WTC11 (cell line): ENCODE measurements at regions of chr5 and their contacts with region 1.

Region 1: DNA sequence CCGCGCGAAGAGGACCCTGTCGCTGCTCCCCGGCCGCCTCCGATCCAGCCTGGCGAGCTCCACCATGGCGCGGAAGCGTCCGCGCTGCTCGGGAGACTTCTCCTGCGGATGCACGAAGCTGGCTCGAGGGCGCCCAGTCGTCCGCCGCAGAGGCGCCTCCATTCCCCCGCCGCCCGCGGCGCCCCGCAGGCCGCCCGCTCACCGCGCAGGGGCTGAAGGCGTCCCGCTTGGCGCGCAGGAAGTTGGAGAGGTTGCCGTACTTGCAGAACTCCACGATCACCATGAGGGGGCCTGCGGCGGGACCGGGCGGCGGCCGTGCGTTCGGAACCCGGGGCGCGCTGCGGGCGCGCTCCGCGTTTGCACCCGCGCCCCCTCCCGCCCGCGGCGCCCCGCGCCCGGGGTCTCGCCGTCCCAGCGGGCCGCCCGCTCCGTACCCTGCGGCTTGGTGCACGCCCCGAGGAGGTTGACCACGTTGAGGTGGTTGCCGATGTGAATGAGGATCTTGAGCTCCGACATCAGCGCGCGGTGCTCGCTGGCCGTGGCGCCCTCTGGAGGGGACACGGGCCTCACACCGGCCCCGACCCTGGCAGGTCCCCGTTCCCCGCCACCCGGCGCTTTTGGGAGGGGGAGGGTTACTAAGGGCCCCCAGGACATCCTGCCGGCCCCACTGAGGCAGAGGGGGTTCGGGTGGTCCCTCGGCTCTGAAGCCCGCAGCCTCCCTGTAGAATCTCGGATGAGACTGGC is 27.7 kb upstream of the SCGB3A1 start:
- DNase-seq: peak; percentile 76
- ATAC-seq: peak; percentile 76
- H3K4me3 Mint-ChIP-seq: peak overlapping the region; percentile 63
- H3K27ac Mint-ChIP-seq: no peak overlapping the region
- H3K4me1 Mint-ChIP-seq: peaks cover 2% of the 10 kb centered on the region; the same call in 1 of the 2 replicates
- H3K27me3 Mint-ChIP-seq: peaks cover 16% of the 10 kb centered on the region
- CTCF ChIP-seq: peak; percentile 36; the same call in 1 of the 2 replicates

Region 2: DNA sequence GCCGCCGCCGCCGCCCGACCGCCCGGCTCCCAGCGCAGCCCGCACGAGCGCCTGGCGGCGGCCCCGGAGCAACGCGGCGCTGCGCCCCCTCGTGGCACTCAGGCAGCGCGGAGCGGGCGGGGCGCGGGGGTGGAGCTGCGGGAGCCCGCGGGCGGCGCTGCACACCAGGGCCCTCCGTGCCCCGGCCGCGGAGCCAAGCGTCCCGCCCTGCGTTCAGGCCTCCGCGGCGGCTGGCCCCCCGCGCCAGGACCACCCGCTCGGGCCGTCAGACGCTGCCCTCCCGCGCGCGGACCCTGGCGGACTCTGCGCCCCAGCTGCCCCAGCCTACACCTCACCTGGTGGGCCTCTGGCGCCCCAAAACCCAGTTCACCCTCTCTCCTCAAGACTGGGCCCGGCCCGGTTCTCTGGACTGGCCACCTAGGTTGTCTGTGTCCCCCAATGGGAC is 409.8 kb before region 1 on chr5 and contains the start of gene RASGEF1C:
- CTCF ChIA-PET with region 1: interaction called, 11 read pairs
- POLR2A ChIA-PET with region 1: no interaction called
- DNase-seq: peak; percentile 71
- ATAC-seq: peak; percentile 82
- H3K4me3 Mint-ChIP-seq: peak within 1 kb of the TSS; percentile 72
- H3K27ac Mint-ChIP-seq: no peak within 1 kb of the TSS
- H3K4me1 Mint-ChIP-seq: peaks cover 10% of the 10 kb centered on the region
- H3K27me3 Mint-ChIP-seq: peaks cover 35% of the 10 kb centered on the region
- CTCF ChIP-seq: 0 out of 2 replicates have a peak, but pooled peaks have one; percentile 13
- total RNA-seq, gene RASGEF1C: 0.44 to 0.96 TPM (median 0.82 TPM) in 3 replicates

Region 3: DNA sequence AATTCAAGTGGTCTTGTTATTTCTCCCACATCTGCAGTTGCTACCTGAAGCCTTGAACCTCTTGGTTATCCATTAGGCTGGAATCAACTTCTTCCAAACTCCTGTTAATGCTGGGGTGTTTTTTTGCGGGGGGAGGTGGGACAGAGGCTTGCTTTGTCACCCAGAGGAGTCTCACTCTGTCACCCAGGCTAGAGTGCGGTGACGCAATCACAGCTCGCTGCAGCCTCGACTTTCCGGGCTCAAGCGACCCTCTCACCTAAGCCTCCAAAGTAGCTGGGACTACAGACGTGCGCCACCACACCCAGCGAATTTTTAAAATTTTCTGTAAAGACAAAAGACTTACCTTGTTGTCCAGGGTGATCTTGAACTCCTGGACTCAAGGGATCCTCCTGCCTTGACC is 32.1 kb before region 1 on chr5:
- CTCF ChIA-PET with region 1: interaction called, 11 read pairs
- POLR2A ChIA-PET with region 1: no interaction called
- DNase-seq: no peak
- ATAC-seq: no peak
- H3K4me3 Mint-ChIP-seq: no peak overlapping the region
- H3K27ac Mint-ChIP-seq: no peak overlapping the region
- H3K4me1 Mint-ChIP-seq: no peaks in the 10 kb centered on the region
- H3K27me3 Mint-ChIP-seq: peaks cover 27% of the 10 kb centered on the region
- CTCF ChIP-seq: no peak

Region 4: GRCh38 chr5:180636403-180637075 is 17.5 kb after region 1 on chr5:
- CTCF ChIA-PET with region 1: interaction called, 42 read pairs
- POLR2A ChIA-PET with region 1: no interaction called
- DNase-seq: peak; percentile 7
- ATAC-seq: no peak
- H3K4me3 Mint-ChIP-seq: no peak overlapping the region
- H3K27ac Mint-ChIP-seq: no peak overlapping the region
- H3K4me1 Mint-ChIP-seq: 0 out of 2 replicates have a peak, but pooled peaks cover 6% of the 10 kb centered on the region
- H3K27me3 Mint-ChIP-seq: no peaks in the 10 kb centered on the region
- CTCF ChIP-seq: no peak

Region 5: DNA sequence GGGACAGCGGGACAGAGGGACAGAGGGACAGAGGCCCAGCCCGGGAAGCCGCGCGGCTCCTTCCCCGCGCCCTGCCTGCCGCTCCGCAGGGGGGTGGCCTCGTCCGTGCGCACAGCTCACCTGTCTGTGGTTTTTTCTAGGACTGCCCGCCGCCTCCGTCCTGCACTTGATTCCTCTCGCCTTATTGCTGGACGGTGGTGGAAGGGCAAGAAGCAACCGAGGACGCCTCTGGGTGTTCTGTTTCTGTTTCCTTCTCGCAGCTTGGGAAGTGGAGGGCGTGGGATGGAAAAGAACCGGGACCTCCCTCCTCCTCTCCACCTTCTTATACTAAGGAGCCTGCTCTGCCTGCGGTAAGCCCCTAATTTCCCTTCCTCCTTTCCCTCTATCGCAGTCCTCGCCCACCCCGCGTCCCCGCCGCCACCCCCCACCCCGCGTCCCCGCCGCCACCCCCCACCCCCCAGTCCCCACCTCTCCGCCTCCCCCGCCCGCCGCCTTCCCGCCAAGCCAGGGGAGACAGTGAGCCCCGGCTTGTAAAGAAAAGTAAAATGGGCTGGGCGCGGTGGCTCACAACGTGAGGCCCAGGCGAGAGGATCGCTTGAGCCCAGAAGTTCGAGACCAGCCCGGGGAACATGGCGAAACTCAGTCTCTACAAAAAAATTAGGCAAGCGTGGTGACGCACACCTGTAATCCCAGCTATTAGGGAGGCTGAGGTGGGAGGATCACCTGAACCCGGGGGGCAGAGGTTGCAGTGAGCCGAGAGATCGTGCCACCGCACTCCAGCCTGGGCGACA is 40.0 kb after region 1 on chr5:
- CTCF ChIA-PET with region 1: interaction called, 11 read pairs
- POLR2A ChIA-PET with region 1: no interaction called
- DNase-seq: no peak
- ATAC-seq: peak; percentile 58
- H3K4me3 Mint-ChIP-seq: peak overlapping the region; percentile 62
- H3K27ac Mint-ChIP-seq: no peak overlapping the region
- H3K4me1 Mint-ChIP-seq: peaks cover 2% of the 10 kb centered on the region; the same call in 1 of the 2 replicates
- H3K27me3 Mint-ChIP-seq: peaks cover 10% of the 10 kb centered on the region
- CTCF ChIP-seq: no peak

Region 6: GRCh38 chr5:180683220-180683922 is 64.4 kb after region 1 on chr5:
- CTCF ChIA-PET with region 1: interaction called, 12 read pairs
- POLR2A ChIA-PET with region 1: no interaction called
- DNase-seq: no peak
- ATAC-seq: no peak
- H3K4me3 Mint-ChIP-seq: no peak overlapping the region
- H3K27ac Mint-ChIP-seq: no peak overlapping the region
- H3K4me1 Mint-ChIP-seq: peaks cover 15% of the 10 kb centered on the region
- H3K27me3 Mint-ChIP-seq: peaks cover 4% of the 10 kb centered on the region; the same call in 1 of the 2 replicates
- CTCF ChIP-seq: no peak

Region 7: DNA sequence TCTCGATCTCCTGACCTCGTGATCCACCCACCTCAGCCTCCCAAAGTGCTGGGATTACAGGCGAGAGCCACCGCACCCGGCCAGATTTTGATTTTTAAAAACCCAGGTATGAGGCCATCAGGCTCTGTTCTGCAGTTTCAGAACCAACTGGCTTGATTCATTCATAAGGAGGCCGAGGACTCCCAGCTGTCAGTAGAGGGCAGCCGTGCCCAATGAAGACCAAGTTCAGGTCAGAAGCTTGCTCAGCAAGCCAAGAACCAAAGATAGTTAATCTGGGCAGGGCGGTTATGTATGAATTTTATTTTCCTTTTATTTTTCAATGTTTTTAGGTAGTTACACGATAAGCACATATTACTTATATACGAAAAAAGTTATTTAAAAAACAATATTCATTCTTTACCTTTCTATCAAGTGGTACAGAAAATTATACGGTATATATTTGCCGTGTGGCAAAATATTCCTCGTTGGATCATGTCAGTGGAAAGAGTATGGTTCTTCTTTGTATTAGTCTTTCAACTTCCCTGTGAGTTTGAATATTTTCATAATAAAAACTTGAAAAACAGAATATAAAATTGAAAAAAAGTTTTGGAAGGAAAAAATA is 165.6 kb after region 1 on chr5:
- CTCF ChIA-PET with region 1: interaction called, 12 read pairs
- POLR2A ChIA-PET with region 1: no interaction called
- DNase-seq: peak; percentile 71
- ATAC-seq: peak; percentile 27
- H3K4me3 Mint-ChIP-seq: no peak overlapping the region
- H3K27ac Mint-ChIP-seq: peak overlapping the region; percentile 60
- H3K4me1 Mint-ChIP-seq: peaks cover 41% of the 10 kb centered on the region
- H3K27me3 Mint-ChIP-seq: no peaks in the 10 kb centered on the region; the same call in 1 of the 2 replicates
- CTCF ChIP-seq: no peak